Mammary epithelial cell (primary cell): ENCODE measurements at regions of chr1 and their contacts with region 1.

Region 1: GRCh38 chr1:35030756-35031446 is 844 bp downstream of the ZMYM6 start:
- DNase-seq: peak; percentile 50
- H3K4me3 ChIP-seq: peak overlapping the region; percentile 58 to 96 (median 82)
- H3K27ac ChIP-seq: peak overlapping the region; percentile 86
- H3K4me1 ChIP-seq: peaks cover 9% of the 10 kb centered on the region
- H3K27me3 ChIP-seq: no peaks in the 10 kb centered on the region
- CTCF ChIP-seq: no peak

Region 2: GRCh38 chr1:34885405-34886247 is 145.3 kb before region 1 on chr1:
- CTCF ChIA-PET with region 1: no interaction called
- dilution Hi-C with region 1: no loop called
- in situ Hi-C with region 1: no loop called
- intact Hi-C with region 1: no loop called
- DNase-seq: no peak
- H3K4me3 ChIP-seq: no peak overlapping the region
- H3K27ac ChIP-seq: no peak overlapping the region
- H3K4me1 ChIP-seq: no peaks in the 10 kb centered on the region
- H3K27me3 ChIP-seq: peaks cover 8% of the 10 kb centered on the region
- CTCF ChIP-seq: no peak

Region 3: DNA sequence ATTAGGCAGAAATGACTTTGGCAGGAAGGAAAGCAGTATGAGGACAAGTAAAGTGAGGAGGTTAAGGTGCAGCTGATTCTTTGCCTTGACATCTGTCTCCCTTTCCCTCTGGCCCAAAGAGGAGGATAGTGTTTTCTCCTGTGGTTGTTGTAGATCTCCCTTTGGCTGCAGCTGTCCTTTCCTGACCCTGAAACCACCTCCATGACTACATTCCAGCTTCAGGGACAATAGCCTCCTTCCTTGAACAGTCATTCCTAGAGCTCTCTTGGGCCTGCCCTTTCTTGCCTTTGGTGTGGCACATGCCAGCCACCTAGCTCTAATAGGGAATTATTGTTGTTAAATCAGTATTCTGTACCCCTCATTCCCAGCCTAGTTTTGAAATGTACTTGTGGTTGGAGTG is 54.5 kb after region 1 on chr1:
- CTCF ChIA-PET with region 1: no interaction called
- dilution Hi-C with region 1: no loop called
- in situ Hi-C with region 1: no loop called
- intact Hi-C with region 1: loop called (anchors 1 kb)
- DNase-seq: peak; percentile 92
- H3K4me3 ChIP-seq: peak overlapping the region; percentile 13 to 30 (median 17)
- H3K27ac ChIP-seq: peak overlapping the region; percentile 92
- H3K4me1 ChIP-seq: peaks cover 24% of the 10 kb centered on the region
- H3K27me3 ChIP-seq: no peaks in the 10 kb centered on the region
- CTCF ChIP-seq: no peak

Region 4: DNA sequence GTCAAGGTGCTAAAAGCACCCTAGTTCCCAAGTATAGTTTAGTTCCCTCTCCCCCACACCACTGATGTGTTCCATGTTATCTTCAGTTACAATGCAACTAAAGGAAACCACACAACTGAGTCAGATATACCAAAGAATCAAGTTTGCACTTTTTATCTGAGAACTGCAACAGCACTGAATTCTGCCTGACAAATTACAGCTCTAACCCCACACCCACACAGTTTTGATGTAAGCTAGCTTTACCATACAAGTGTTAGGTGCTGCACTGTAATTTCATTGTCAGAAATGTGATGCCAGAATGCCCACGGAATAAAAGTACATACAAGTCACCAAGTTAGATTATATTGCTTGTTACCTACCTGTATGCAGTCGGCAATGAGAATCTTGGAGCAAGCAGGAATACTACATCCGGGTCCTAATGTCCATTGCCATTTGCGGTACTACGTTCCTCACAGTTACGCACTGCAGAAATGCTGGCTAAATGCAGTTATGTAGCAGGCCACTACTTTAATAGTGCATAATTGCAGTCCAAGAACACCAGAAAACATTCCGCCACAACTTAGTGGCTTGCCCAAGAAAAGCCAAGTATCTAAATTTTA is 150.0 kb after region 1 on chr1:
- CTCF ChIA-PET with region 1: no interaction called
- dilution Hi-C with region 1: no loop called
- in situ Hi-C with region 1: no loop called
- intact Hi-C with region 1: loop called (anchors 2 kb)
- DNase-seq: no peak
- H3K4me3 ChIP-seq: no peak overlapping the region
- H3K27ac ChIP-seq: no peak overlapping the region
- H3K4me1 ChIP-seq: no peaks in the 10 kb centered on the region
- H3K27me3 ChIP-seq: no peaks in the 10 kb centered on the region
- CTCF ChIP-seq: no peak